A549 (cell line): ENCODE measurements at regions of chr7 and their contacts with region 1.

Region 1: DNA sequence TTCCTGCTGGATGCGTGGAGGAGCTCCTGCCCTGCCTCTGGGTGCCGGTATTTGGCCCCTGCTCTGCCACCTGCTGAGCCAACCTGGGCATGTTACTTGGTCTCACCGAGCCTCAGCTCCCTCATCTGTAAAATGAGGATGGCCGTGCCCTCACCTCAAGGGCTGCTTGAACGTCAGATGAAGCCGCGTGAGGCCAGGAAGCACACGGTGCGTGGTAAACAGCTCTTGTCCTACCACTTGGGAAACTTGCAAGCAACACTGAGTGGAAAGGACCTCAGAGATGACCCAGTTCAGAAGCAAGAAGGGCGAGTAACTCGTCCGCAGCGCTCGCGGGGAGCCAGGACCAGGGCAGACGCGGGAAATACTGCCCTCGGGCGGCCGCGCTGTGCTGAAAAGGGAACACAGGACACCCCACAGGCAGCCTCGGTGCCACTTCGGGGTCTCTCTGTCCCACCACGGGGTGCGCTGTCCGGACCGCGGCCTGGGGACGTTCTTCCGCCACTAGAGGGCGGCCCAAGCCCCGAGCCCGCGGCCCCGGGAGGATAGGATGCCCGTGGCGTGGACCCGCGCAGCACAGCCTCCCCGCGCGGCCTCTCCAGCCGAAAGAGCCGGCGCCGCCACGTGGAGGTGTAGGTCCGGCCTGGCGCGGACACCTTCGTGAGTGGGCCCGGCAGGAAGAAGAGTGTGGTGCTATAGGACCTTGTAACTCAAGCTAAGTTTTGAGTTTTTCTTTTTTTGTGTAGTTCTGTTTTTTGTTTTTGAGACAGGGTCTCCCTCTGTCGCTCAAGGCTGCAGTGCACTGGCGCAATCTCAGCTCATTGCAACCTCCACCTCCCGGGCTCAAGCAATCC is 94.1 kb downstream of the PRKAG2 start:
- DNase-seq: peak; percentile 70 to 90
- ATAC-seq: peak; percentile 94 to 98
- H3K4me3 ChIP-seq: peak overlapping the region; percentile 35
- H3K27ac ChIP-seq: peak overlapping the region; percentile 62 to 70
- H3K4me1 ChIP-seq: 0 out of 3 replicates have a peak, but pooled peaks cover 4% of the 10 kb centered on the region
- CTCF ChIP-seq: peak; percentile 99
- EP300 ChIP-seq: no peak
- POLR2A ChIP-seq: no peak
- RAD21 ChIP-seq: peak; percentile 72 to 92

Region 2: GRCh38 chr7:151754142-151754590 is 28.7 kb before region 1 on chr7:
- CTCF ChIA-PET with region 1: interaction called, 71 read pairs
- POLR2A ChIA-PET with region 1: no interaction called
- DNase-seq: peak; percentile 97 to 98
- ATAC-seq: peak; percentile 96 to 98
- H3K4me3 ChIP-seq: no peak overlapping the region
- H3K27ac ChIP-seq: peak overlapping the region; percentile 91 to 96
- H3K4me1 ChIP-seq: peaks cover 41% of the 10 kb centered on the region
- CTCF ChIP-seq: peak; percentile 94
- EP300 ChIP-seq: peak; percentile 73 to 87; a peak in 3 of 5 replicates
- POLR2A ChIP-seq: no peak
- RAD21 ChIP-seq: peak; percentile 77 to 85

Region 3: GRCh38 chr7:151808400-151809183 is 25.8 kb after region 1 on chr7:
- CTCF ChIA-PET with region 1: interaction called, 64 read pairs
- POLR2A ChIA-PET with region 1: no interaction called
- DNase-seq: peak; percentile 76 to 87
- ATAC-seq: peak; percentile 89 to 92
- H3K4me3 ChIP-seq: no peak overlapping the region
- H3K27ac ChIP-seq: peak overlapping the region; percentile 60 to 86; a peak in 5 of 6 replicates
- H3K4me1 ChIP-seq: peaks cover 21% of the 10 kb centered on the region
- CTCF ChIP-seq: no peak
- EP300 ChIP-seq: no peak
- POLR2A ChIP-seq: no peak
- RAD21 ChIP-seq: no peak

Region 4: DNA sequence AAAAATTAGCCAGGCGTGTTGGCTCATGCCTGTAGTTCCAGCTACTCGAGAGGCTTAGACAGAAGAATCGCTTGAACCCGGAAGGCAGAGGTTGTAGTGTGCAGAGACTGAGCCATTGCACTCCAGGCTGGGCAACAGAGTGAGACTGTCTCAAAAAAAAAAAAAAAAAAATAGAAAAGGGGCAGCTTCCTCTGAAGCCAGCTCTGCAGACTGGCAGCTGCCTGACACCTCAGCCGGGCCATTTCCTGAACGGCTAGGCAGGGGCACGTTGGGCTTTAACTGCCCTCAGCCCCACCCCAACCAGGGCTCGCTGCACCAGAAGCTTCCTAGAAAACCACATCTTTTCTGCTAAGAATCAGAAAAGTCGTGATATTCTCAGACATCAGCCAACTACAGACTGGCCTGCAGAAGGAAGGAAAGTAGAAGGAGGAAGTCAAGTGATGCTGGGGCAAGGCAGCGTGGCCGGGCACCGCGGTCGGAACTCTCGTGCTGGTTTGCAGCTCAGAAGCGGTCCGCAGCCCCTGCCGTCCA is 56.1 kb after region 1 on chr7:
- CTCF ChIA-PET with region 1: interaction called, 40 read pairs
- POLR2A ChIA-PET with region 1: no interaction called
- DNase-seq: no peak
- ATAC-seq: no peak
- H3K4me3 ChIP-seq: no peak overlapping the region
- H3K27ac ChIP-seq: no peak overlapping the region
- H3K4me1 ChIP-seq: peaks cover 7% of the 10 kb centered on the region
- CTCF ChIP-seq: no peak
- EP300 ChIP-seq: no peak
- POLR2A ChIP-seq: no peak
- RAD21 ChIP-seq: no peak

Region 5: GRCh38 chr7:151871921-151872320 is 89.1 kb after region 1 on chr7:
- CTCF ChIA-PET with region 1: interaction called, 45 read pairs
- POLR2A ChIA-PET with region 1: no interaction called
- DNase-seq: peak; percentile 15 to 37
- ATAC-seq: no peak
- H3K4me3 ChIP-seq: no peak overlapping the region
- H3K27ac ChIP-seq: no peak overlapping the region
- H3K4me1 ChIP-seq: peaks cover 14% of the 10 kb centered on the region
- CTCF ChIP-seq: peak; percentile 23; the same call in 2 of the 3 replicates
- EP300 ChIP-seq: no peak
- POLR2A ChIP-seq: no peak
- RAD21 ChIP-seq: peak; percentile 33 to 57; a peak in 3 of 5 replicates

Region 6: GRCh38 chr7:151925446-151926335 is 142.9 kb after region 1 on chr7:
- CTCF ChIA-PET with region 1: interaction called, 13 read pairs
- POLR2A ChIA-PET with region 1: no interaction called
- DNase-seq: no peak
- ATAC-seq: no peak
- H3K4me3 ChIP-seq: no peak overlapping the region
- H3K27ac ChIP-seq: no peak overlapping the region; a peak in 1 of 6 replicates
- H3K4me1 ChIP-seq: peaks cover 7% of the 10 kb centered on the region; the same call in 2 of the 3 replicates
- CTCF ChIP-seq: no peak
- EP300 ChIP-seq: no peak
- POLR2A ChIP-seq: no peak
- RAD21 ChIP-seq: no peak